ENCODE measurements at regions of chrX and their contacts with region 1.

Region 1: DNA sequence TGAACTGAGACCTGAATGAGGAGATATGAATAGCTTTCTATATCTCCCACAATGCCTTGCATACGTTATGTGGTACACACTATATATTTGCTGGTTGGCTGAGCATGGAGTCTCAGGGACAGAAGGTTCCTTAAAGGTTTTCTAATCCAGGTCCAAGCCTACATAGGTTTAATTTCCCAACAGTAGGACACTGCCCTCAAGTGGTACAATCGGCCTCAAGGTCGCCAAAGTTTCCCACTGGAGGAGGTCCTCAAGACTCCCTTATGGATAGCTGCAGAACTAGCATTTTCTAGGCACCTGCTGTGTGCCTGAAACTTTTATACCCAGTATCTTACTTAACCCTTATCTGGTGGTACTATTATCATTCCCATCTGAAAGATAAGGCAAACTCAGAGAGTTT is 21.0 kb upstream of the EFNB1 start:
- DNase-seq: no peak
- ATAC-seq: no peak
- H3K4me3 ChIP-seq: no peak overlapping the region
- H3K27ac ChIP-seq: no peak overlapping the region
- H3K4me1 ChIP-seq: no peaks in the 10 kb centered on the region
- H3K27me3 ChIP-seq: no peaks in the 10 kb centered on the region
- CTCF ChIP-seq: peak in 4 of 5 experiments; percentile 13 to 43 (median 25)
- POLR2A ChIP-seq: no peak

Region 2: DNA sequence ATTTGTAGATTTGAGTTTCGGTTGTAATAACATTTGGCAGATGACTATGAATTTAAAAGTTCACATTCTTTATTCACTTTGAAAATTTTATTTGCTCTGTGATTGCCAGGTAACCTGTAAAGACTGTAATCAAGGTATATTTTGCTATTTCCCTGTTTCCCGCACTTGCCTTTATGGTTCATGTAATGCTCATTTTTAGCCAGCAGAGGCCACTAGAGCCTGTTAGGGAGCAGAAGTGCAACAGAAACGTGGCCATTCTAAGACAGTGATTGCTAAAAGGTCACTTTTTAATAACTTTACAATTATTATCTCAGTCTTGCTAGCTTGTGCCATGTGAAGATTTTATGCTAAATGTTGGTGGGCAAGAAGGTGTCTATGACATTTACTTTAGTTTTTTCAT is 296.6 kb before region 1 on chrX:
- in situ Hi-C with region 1: loop called in 2 of 4 experiments (anchors 25 kb)
- intact Hi-C with region 1: loop called (anchors 5 kb)
- DNase-seq: no peak
- ATAC-seq: no peak
- H3K4me3 ChIP-seq: no peak overlapping the region
- H3K27ac ChIP-seq: no peak overlapping the region
- H3K4me1 ChIP-seq: peaks cover 7% of the 10 kb centered on the region in 2 donors
- H3K27me3 ChIP-seq: no peaks in the 10 kb centered on the region
- CTCF ChIP-seq: peak; percentile 45 to 85 (median 64)
- POLR2A ChIP-seq: no peak

Region 3: DNA sequence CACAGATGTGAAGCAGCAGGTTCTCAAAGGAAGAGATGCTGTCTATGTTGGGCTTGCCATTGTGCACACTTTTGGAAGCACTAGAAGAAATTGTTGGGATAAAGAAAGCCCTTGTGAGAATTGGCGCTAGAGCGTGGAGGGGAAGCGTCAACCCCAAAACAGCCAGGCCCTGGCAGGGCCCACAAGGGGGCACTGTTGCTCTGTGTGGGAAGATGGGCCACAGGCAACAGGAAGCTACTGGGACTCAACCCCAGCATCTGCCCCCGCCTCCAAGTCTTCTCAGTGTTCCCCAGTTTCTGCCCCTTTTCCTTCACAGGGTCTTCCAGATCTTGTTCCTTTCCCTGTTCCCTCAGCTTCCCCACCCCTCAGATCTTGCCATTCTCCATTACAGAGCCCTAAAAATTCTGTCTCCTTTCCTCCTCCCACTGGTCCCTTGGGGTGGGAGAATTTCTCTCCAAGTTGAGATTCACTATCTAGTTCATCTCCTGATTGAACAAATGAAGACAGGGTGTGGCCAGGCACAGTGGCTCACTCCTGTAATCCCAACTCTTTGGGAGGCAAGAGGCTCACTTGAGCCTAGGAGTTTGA is 74.8 kb before region 1 on chrX:
- in situ Hi-C with region 1: no loop called
- intact Hi-C with region 1: loop called (anchors 5 kb)
- DNase-seq: peak in 1 of 2 donors; percentile 30
- ATAC-seq: peak in 1 of 2 donors; percentile 60
- H3K4me3 ChIP-seq: no peak overlapping the region
- H3K27ac ChIP-seq: no peak overlapping the region
- H3K4me1 ChIP-seq: no peaks in the 10 kb centered on the region
- H3K27me3 ChIP-seq: peaks cover 0 to 4% (median 0%) of the 10 kb centered on the region in 3 donors
- CTCF ChIP-seq: peak; percentile 32 to 72 (median 59)
- POLR2A ChIP-seq: no peak

Region 4: GRCh38 chrX:68889249-68889648 is 81.4 kb after region 1 on chrX:
- in situ Hi-C with region 1: no loop called
- intact Hi-C with region 1: no loop called
- DNase-seq: no peak
- ATAC-seq: no peak
- H3K4me3 ChIP-seq: no peak overlapping the region
- H3K27ac ChIP-seq: no peak overlapping the region
- H3K4me1 ChIP-seq: peaks cover 4 to 7% of the 10 kb centered on the region in 2 donors
- H3K27me3 ChIP-seq: peaks cover 0 to 3% (median 0%) of the 10 kb centered on the region in 3 donors
- CTCF ChIP-seq: no peak
- POLR2A ChIP-seq: no peak

Measured in gastrocnemius medialis (tissue), 4 donors.